Cardiac septum (tissue), 1 donor: ENCODE measurements at regions of chr11 and their contacts with region 1.

Region 1: GRCh38 chr11:66344550-66345315 is at the start of gene BRMS1:
- DNase-seq: peak; percentile 100
- total RNA-seq, gene BRMS1: 14.6 TPM

Region 2: GRCh38 chr11:66289548-66290327 is 55.0 kb before region 1 on chr11:
- intact Hi-C with region 1: no loop called
- DNase-seq: peak; percentile 83

Region 3: DNA sequence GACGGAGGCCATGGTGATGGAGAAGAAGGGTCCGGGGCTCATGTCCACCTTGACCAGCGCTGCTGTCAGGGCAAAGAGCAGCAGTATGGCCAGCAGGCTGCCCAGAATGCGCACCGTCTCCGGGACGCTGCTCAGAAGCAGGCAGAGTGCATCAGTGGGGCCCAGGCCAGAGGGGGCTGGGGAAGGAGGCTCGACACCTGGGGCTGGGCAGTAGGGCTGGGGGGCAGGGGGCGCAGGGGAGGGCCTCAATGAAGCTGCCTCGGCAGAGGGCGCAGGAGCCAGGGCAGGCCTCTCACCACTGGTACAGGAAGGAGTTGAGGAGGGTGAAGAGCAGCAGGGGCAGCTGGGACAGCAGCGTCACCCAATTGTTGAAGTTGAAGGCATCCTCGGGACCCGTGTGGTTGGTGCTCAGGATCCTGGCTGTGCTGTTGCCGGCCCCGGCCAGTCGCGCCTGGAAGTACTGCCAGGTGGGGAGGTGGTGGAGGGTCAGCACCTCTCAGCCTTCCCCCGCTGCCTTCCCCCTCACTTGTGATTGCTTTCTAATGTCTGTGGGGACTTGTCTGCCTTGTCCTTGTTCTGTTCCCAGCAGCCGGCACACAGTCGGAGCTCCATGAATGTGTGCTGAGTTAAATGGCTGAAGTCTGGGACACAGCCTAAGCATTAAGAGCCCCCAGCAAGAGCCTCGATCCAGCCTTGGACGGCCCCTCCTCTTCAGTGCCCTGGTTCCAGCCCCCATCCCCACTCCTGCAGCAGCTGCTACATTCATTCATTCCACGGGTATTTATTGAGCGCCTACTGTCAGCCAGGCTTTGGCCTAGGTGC is 24.6 kb after region 1 on chr11:
- intact Hi-C with region 1: loop called (anchors 2 kb)
- DNase-seq: no peak

Region 4: DNA sequence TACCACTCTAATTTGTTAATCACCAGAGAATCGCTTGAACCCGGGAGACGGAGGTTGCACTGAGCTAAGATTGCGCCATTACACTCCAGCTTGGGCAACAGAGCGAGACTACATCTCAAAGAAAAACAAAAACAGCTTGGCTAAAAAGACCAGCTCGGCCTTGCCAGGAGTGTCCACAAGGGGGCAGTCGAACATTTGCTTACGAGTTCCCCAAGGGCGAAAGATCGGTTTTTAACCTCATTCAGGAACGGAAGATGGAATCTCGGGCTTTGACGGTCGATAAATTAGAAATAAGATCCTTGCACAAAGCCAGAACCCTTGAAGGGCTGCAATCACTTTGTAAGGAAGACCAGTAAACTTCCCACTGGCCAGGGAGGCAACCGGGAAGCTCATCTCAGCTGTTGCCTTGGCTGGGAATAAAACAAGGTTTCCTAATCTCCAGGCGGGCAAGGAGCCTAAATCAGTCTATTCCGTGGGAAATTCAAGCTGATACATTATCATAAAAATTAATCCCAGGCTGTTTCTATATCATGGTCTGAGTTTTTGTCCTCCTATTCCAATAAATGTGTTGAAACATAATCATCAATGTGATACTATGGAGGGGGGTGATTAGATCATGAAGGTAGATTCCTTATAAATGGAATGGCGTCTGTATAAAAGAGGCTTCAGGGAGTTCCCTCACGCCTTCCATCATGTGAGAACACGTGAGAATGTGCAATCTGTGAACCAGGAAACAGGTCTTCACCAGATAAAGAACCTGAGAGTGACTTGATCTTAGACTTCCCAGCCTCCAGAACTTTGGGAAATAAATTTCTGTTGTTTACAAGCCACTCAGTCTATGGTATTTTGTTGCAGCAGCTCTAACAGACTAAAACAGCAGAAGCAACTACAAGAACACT is 41.7 kb after region 1 on chr11:
- intact Hi-C with region 1: loop called (anchors 5 kb)
- DNase-seq: peak; percentile 86